Naive thymus-derived CD4-positive, alpha-beta T cell (primary cell): ENCODE measurements at regions of chr5 and their contacts with region 1.

Region 1: DNA sequence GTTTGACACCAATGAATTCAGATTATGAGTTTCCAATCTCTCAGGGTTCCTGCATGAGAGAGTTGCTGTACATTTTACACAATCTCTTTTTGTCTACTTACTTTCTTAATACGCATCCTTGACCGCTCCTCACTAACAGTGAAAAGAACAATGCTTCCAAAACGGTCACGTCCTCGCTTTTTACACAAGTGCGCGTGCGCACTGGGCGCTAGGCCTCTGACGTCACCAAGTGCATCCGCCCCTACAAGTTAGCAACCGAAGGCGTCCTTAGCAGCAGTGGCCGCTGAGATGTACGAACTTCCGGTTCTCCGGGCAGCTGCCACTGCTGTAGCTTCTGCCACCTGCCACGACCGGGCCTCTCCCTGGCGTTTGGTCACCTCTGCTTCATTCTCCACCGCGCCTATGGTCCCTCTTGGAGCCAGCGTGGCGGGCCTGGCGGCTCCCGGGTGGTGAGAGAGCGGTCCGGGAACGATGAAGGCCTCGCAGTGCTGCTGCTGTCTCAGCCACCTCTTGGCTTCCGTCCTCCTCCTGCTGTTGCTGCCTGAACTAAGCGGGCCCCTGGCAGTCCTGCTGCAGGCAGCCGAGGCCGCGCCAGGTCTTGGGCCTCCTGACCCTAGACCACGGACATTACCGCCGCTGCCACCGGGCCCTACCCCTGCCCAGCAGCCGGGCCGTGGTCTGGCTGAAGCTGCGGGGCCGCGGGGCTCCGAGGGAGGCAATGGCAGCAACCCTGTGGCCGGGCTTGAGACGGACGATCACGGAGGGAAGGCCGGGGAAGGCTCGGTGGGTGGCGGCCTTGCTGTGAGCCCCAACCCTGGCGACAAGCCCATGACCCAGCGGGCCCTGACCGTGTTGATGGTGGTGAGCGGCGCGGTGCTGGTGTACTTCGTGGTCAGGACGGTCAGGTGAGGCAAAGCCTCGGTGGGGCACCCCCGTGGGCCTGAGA is at the start of gene FAM174A:
- DNase-seq: peak; percentile 88 to 96 (median 95)
- ATAC-seq: peak; percentile 91
- H3K4me3 ChIP-seq: peak within 1 kb of the TSS; percentile 88
- H3K4me3 Mint-ChIP-seq: peak within 1 kb of the TSS; percentile 84 to 100 (median 96)
- H3K27ac ChIP-seq: peak within 1 kb of the TSS; percentile 82
- H3K27ac Mint-ChIP-seq: peak within 1 kb of the TSS; percentile 81 to 100 (median 97)
- H3K4me1 ChIP-seq: peaks cover 10 to 11% of the 10 kb centered on the region in 2 donors
- H3K4me1 Mint-ChIP-seq: peaks cover 15 to 51% (median 33%) of the 10 kb centered on the region in 7 donors
- H3K27me3 ChIP-seq: no peaks in the 10 kb centered on the region
- H3K27me3 Mint-ChIP-seq: peaks cover 0 to 15% (median 0%) of the 10 kb centered on the region in 5 donors
- total RNA-seq, gene FAM174A: 4.6 to 10.7 (median 6.0) TPM

Region 2: DNA sequence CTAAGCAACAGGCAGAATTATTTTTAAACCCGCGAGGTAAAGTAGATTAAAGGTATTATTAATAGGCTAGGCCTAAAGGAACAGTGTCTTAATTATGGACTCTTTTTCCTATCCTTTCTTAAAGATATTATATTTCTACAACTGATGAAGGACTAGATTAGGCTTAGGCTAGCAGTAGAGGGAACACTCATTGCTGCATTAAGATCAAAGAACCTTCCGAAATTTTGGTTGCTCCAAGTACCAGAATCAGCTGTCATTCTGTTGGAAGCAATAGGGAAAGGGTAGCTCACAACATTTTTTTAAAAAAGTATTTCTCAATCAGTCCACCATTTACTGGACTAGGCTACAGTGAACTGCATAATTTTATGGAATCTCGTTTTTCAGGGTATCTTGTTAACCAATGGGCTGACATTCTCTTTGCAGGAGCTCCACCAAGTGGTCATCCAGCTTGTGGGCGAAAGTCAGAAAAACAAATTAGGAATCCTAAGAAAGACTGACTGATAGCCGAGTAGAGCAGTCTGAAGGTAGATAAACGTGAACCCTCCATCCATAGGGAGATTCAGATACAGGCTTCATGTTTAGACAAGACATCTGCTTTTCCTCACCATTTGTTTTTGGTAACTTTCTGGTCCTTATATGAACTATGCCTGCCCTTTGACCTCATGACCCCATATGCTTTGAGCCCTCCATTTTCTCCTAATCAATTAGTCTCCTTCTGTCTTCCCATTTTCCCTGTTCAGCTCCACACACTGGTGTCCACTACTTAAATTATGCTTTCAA is 1502.9 kb before region 1 on chr5:
- CTCF ChIA-PET with region 1: no interaction called
- POLR2A ChIA-PET with region 1: no interaction called
- intact Hi-C with region 1: loop called in 1 of 2 experiments (anchors 5 kb)
- DNase-seq: peak in 3 of 9 donors; percentile 22 to 43 (median 38)
- ATAC-seq: peak; percentile 49
- H3K4me3 ChIP-seq: peak overlapping the region; percentile 43
- H3K4me3 Mint-ChIP-seq: peak overlapping the region; percentile 71 to 97 (median 88)
- H3K27ac ChIP-seq: peak overlapping the region; percentile 70
- H3K27ac Mint-ChIP-seq: peak overlapping the region; percentile 85 to 98 (median 96)
- H3K4me1 ChIP-seq: peaks cover 30 to 31% of the 10 kb centered on the region in 2 donors
- H3K4me1 Mint-ChIP-seq: peaks cover 32 to 87% (median 79%) of the 10 kb centered on the region in 7 donors
- H3K27me3 ChIP-seq: no peaks in the 10 kb centered on the region
- H3K27me3 Mint-ChIP-seq: no peaks in the 10 kb centered on the region

Region 3: DNA sequence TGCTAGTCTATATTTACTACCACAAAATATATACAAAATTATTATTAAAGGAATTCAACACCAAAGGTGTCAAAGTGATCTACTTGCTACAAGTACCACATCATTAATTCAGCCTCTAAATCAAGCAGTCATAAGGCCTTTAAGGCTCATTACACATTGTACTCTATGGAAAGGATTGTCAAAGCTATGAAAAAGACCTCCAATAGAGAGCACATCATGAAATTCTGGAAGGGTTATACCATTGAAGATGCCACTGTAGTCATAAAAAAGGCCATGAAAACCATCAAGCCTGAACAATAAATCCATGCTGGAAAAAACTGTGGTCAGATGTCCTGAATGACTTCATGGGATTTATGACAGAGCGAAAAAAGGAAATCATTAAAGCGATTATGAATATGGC is 708.2 kb before region 1 on chr5:
- CTCF ChIA-PET with region 1: no interaction called
- POLR2A ChIA-PET with region 1: no interaction called
- intact Hi-C with region 1: no loop called
- DNase-seq: no peak
- ATAC-seq: no peak
- H3K4me3 ChIP-seq: no peak overlapping the region
- H3K4me3 Mint-ChIP-seq: no peak overlapping the region
- H3K27ac ChIP-seq: no peak overlapping the region
- H3K27ac Mint-ChIP-seq: no peak overlapping the region
- H3K4me1 ChIP-seq: no peaks in the 10 kb centered on the region
- H3K4me1 Mint-ChIP-seq: no peaks in the 10 kb centered on the region
- H3K27me3 ChIP-seq: no peaks in the 10 kb centered on the region
- H3K27me3 Mint-ChIP-seq: no peaks in the 10 kb centered on the region

Region 4: GRCh38 chr5:100667161-100667630 is 131.9 kb after region 1 on chr5:
- CTCF ChIA-PET with region 1: no interaction called
- POLR2A ChIA-PET with region 1: no interaction called
- intact Hi-C with region 1: loop called in 1 of 2 experiments (anchors 5 kb)
- DNase-seq: peak in 5 of 9 donors; percentile 4 to 42 (median 13)
- ATAC-seq: peak; percentile 80
- H3K4me3 ChIP-seq: no peak overlapping the region
- H3K4me3 Mint-ChIP-seq: peak overlapping the region in 1 of 10 donors; percentile 3
- H3K27ac ChIP-seq: no peak overlapping the region
- H3K27ac Mint-ChIP-seq: peak overlapping the region in 1 of 9 donors; percentile 4
- H3K4me1 ChIP-seq: peaks cover 3 to 14% of the 10 kb centered on the region in 2 donors
- H3K4me1 Mint-ChIP-seq: peaks cover 0 to 11% (median 7%) of the 10 kb centered on the region in 7 donors
- H3K27me3 ChIP-seq: no peaks in the 10 kb centered on the region
- H3K27me3 Mint-ChIP-seq: peaks cover 0 to 9% (median 0%) of the 10 kb centered on the region in 5 donors

Region 5: DNA sequence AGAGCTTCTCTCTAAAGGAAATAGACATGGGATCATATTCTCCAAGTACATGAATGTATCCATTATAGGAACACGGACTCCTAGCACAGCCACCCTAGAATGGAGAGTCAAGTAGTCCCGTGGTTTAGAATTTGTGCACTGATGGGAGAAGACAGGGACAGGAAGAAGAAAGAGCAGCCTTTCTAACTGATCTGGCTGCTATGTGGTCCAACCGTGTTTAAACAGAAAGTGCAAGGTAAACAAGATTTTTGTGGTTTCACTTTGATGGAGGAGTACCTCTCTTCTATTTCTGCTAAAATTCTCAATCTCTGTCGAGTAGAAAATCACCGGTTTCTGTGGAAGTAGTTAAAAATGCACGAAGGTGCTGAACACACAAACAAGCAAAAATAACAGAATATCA is 196.4 kb after region 1 on chr5:
- CTCF ChIA-PET with region 1: no interaction called
- POLR2A ChIA-PET with region 1: interaction called, 3 read pairs
- intact Hi-C with region 1: loop called (anchors 2 to 5 kb)
- DNase-seq: peak in 7 of 9 donors; percentile 14 to 55 (median 45)
- ATAC-seq: peak; percentile 87
- H3K4me3 ChIP-seq: peak overlapping the region; percentile 7
- H3K4me3 Mint-ChIP-seq: peak overlapping the region in 9 of 10 donors; percentile 1 to 85 (median 80)
- H3K27ac ChIP-seq: no peak overlapping the region
- H3K27ac Mint-ChIP-seq: peak overlapping the region; percentile 28 to 83 (median 65)
- H3K4me1 ChIP-seq: peaks cover 0 to 11% of the 10 kb centered on the region in 2 donors
- H3K4me1 Mint-ChIP-seq: peaks cover 4 to 14% (median 9%) of the 10 kb centered on the region in 7 donors
- H3K27me3 ChIP-seq: no peaks in the 10 kb centered on the region
- H3K27me3 Mint-ChIP-seq: no peaks in the 10 kb centered on the region

Region 6: GRCh38 chr5:101244621-101245020 is 709.3 kb after region 1 on chr5:
- CTCF ChIA-PET with region 1: no interaction called
- POLR2A ChIA-PET with region 1: no interaction called
- intact Hi-C with region 1: no loop called
- DNase-seq: no peak
- ATAC-seq: no peak
- H3K4me3 ChIP-seq: no peak overlapping the region
- H3K4me3 Mint-ChIP-seq: no peak overlapping the region
- H3K27ac ChIP-seq: no peak overlapping the region
- H3K27ac Mint-ChIP-seq: no peak overlapping the region
- H3K4me1 ChIP-seq: no peaks in the 10 kb centered on the region
- H3K4me1 Mint-ChIP-seq: no peaks in the 10 kb centered on the region
- H3K27me3 ChIP-seq: no peaks in the 10 kb centered on the region
- H3K27me3 Mint-ChIP-seq: peaks cover 0 to 15% (median 4%) of the 10 kb centered on the region in 5 donors

Region 7: DNA sequence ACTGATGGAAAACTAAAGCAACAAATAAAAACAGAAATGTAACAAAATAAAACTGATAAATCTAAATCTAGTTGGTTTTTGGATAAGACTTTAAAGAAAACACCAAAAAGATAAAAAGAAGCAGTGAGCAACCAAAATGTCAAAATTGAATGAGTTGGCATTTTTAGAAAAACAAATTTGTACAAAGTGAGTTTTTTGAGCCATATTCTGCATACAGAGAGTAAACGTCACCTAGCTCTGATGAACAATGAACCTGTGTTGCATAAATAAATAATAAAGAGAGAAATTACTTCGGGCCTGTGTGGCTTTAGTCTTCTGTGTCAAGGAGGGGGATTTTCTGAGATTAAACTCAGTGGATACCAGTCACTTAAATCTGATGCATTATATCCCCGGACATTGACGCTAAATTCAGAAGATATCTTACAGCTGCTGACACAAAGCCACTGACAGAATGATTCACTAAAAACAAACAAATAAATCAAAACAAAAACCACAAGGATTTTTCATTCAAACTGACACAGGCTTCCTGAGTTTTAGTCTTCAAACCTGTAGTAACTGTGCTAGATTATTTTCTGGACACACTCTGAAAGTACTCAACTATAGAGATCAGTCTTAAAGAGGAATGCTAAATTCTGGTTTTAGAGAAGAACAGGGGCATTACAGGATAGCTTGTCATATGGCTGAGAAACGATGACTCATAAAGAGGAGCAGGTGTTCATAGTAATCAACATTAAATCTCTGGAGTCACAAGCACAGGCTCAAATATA is 771.2 kb after region 1 on chr5:
- CTCF ChIA-PET with region 1: no interaction called
- POLR2A ChIA-PET with region 1: no interaction called
- intact Hi-C with region 1: no loop called
- DNase-seq: no peak
- ATAC-seq: no peak
- H3K4me3 ChIP-seq: no peak overlapping the region
- H3K4me3 Mint-ChIP-seq: no peak overlapping the region
- H3K27ac ChIP-seq: no peak overlapping the region
- H3K27ac Mint-ChIP-seq: no peak overlapping the region
- H3K4me1 ChIP-seq: no peaks in the 10 kb centered on the region
- H3K4me1 Mint-ChIP-seq: no peaks in the 10 kb centered on the region
- H3K27me3 ChIP-seq: no peaks in the 10 kb centered on the region
- H3K27me3 Mint-ChIP-seq: no peaks in the 10 kb centered on the region